Adrenal gland (tissue), 19 donors: ENCODE measurements at regions of chr11 and their contacts with region 1.

Region 1: GRCh38 chr11:2298795-2299761 is 2.6 kb downstream of the C11orf21 start:
- DNase-seq: peak in 3 of 7 donors; percentile 3 to 56 (median 21)
- H3K4me3 ChIP-seq: no peak overlapping the region
- H3K27ac ChIP-seq: no peak overlapping the region
- H3K4me1 ChIP-seq: peaks cover 0 to 14% of the 10 kb centered on the region in 2 donors
- H3K27me3 ChIP-seq: peaks cover 4% of the 10 kb centered on the region
- CTCF ChIP-seq: peak in 2 of 6 experiments; percentile 13 to 26
- POLR2A ChIP-seq: no peak

Region 2: GRCh38 chr11:2027708-2028107 is 271.4 kb before region 1 on chr11:
- intact Hi-C with region 1: no loop called
- DNase-seq: no peak
- H3K4me3 ChIP-seq: no peak overlapping the region
- H3K27ac ChIP-seq: no peak overlapping the region
- H3K4me1 ChIP-seq: no peaks in the 10 kb centered on the region
- H3K27me3 ChIP-seq: no peaks in the 10 kb centered on the region
- CTCF ChIP-seq: no peak
- POLR2A ChIP-seq: no peak

Region 3: DNA sequence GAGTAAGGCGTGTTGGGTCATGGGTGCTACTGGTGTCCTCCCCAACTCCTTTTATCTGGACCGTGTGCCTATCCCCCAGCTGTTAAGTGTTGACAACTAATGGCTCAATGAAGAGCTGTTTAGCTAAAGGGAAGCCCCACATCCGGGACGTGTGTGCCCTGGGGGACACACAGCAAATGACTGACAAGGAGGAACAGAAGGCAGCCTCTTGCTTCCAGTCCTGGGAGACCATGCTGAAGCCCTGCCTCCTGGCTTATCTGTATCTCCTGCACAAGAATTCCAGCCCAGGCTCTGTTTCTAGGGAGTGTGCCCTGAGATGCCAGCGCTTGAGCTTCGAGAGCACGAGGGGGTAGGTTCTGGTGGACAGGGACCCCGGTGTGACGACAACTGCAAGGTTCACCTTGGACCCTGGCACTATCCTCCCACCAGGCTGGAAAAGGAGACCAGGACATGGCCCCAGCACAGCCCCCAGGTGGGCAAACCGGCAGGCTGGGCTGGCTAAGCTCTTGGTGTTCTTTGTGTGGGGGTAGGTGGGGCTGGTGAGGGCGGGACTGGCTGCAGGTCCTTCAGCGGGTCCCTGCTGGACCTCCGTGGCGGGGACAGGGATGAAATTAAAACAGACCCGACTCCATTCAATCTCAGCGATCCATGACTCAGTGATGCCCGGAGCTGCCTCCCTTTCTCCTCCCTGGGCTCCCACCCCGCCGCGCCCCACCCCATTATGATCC is 49.7 kb before region 1 on chr11:
- intact Hi-C with region 1: no loop called
- DNase-seq: no peak
- H3K4me3 ChIP-seq: no peak overlapping the region
- H3K27ac ChIP-seq: no peak overlapping the region
- H3K4me1 ChIP-seq: no peaks in the 10 kb centered on the region
- H3K27me3 ChIP-seq: no peaks in the 10 kb centered on the region
- CTCF ChIP-seq: no peak
- POLR2A ChIP-seq: no peak

Region 4: DNA sequence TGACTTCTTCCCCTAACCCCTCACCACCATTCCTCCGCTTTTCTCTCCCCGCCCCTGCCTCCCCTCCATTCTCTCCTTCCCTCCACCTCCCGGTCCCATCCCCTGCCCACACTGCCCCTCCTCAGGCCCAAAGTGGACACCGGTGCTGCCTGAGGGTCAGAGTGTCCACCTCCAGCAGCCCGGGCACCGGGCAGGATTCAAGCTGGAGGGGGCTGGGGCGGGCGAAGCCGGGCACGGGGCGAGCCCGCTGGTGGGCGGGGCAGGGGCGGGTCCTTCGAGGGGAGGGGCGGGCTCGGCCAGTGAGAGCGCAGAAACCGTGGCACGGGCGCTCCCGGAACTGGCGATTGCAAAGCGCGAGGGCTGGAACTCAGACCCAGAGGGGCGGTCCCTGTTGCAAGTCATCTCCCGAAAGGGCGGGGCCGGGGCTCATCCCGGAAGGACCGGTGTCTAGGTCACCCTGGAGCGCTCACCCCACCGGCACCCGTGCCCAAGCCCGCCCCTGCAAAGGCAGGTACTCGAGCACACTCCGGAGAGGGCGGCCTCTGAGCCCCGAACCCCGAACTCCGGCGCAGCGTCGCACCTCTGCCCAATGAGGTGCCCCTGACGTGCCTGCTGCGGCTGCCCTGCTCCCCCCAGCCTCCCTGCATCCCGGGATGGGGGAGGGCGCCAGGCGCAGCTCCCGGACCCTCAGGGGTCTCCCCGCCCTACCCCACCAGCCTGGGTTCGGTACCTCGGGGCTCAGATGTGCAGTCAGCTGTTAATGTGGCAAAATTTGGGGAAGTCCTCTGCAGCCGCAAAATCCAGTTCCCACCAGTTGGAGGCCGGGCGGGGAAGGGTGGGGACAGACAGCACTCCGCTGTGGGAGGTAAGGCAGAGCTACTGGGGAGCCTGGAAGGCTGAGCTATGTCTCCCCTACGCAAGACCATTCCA is 603.0 kb after region 1 on chr11:
- intact Hi-C with region 1: loop called in 1 of 2 experiments (anchors 10 kb)
- DNase-seq: peak; percentile 92 to 97 (median 97)
- H3K4me3 ChIP-seq: peak overlapping the region in 3 of 4 donors; percentile 33 to 65 (median 63)
- H3K27ac ChIP-seq: peak overlapping the region in 4 of 5 donors; percentile 58 to 85 (median 62)
- H3K4me1 ChIP-seq: peaks cover 6 to 24% of the 10 kb centered on the region in 2 donors
- H3K27me3 ChIP-seq: no peaks in the 10 kb centered on the region
- CTCF ChIP-seq: no peak
- POLR2A ChIP-seq: peak in 1 of 2 donors; percentile 40